A673 (cell line): ENCODE measurements at regions of chr2 and their contacts with region 1.

Region 1: DNA sequence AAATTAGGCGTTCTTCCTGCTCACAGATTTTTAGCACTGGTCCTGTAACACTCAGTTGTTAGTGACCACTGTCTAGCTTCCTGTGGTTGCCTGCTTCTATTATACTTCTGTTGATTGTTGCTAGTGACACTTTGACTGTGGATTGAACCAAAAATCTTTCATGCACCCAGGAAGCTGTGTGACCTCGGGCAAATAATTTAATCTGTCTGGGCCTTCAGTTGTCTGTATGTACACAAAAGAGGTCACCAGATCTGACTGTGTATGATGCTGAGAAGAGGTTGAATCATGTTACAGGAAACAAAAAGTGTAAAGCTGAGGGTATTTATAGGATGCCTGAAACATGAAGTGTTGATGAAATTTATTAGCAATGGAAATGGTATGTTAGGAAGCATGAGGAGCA is 12.7 kb downstream of the ICOS start:
- DNase-seq: no peak
- H3K4me3 ChIP-seq: no peak overlapping the region
- H3K27ac ChIP-seq: no peak overlapping the region
- H3K4me1 ChIP-seq: no peaks in the 10 kb centered on the region
- H3K27me3 ChIP-seq: no peaks in the 10 kb centered on the region
- CTCF ChIP-seq: no peak

Region 2: DNA sequence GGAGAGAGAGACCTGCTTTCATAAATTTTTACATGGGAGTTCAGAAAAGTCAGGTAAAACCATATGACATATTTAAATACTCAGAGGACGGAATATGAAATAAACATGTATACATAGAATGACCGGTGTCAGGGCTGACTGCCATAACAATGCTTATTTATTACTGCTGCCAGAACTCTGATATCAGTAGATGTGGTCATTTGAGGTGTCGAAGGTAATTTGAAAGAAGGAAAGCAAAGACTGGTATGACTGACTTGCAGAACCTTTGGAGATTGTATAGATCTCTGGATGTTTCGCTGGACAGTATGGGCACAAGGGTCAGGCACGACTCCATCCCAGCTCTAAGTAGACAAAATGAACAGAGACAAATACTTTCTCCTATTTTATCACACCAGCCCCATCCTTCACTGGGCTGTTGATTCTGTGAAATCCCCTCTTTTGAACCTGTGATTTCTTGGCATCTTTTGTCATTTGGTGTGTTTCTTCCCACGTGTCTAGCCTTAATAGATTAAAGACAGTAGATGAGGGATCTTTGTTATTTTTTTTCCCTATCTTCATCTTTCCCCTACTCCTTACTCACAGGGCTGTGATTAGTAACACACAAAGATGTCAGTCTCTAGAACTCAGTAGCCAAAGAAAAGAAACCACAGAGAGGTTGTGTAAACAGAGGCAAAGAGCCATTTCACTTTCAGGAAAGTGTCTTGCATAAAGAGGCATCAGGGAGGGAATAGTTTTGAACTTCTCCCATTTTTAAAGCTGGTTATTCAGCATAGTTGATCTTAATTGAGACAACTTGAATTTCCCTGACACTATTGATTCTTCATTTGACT is 49.0 kb after region 1 on chr2:
- CTCF ChIA-PET with region 1: no interaction called
- POLR2A ChIA-PET with region 1: no interaction called
- intact Hi-C with region 1: no loop called
- DNase-seq: no peak
- H3K4me3 ChIP-seq: no peak overlapping the region
- H3K27ac ChIP-seq: no peak overlapping the region
- H3K4me1 ChIP-seq: no peaks in the 10 kb centered on the region
- H3K27me3 ChIP-seq: no peaks in the 10 kb centered on the region
- CTCF ChIP-seq: no peak

Region 3: GRCh38 chr2:204042401-204042800 is 93.2 kb after region 1 on chr2:
- CTCF ChIA-PET with region 1: no interaction called
- POLR2A ChIA-PET with region 1: interaction called, 11 read pairs
- intact Hi-C with region 1: no loop called
- DNase-seq: no peak
- H3K4me3 ChIP-seq: no peak overlapping the region
- H3K27ac ChIP-seq: no peak overlapping the region
- H3K4me1 ChIP-seq: no peaks in the 10 kb centered on the region
- H3K27me3 ChIP-seq: no peaks in the 10 kb centered on the region
- CTCF ChIP-seq: no peak